ENCODE measurements at regions of chr18 and their contacts with region 1.

Region 1: DNA sequence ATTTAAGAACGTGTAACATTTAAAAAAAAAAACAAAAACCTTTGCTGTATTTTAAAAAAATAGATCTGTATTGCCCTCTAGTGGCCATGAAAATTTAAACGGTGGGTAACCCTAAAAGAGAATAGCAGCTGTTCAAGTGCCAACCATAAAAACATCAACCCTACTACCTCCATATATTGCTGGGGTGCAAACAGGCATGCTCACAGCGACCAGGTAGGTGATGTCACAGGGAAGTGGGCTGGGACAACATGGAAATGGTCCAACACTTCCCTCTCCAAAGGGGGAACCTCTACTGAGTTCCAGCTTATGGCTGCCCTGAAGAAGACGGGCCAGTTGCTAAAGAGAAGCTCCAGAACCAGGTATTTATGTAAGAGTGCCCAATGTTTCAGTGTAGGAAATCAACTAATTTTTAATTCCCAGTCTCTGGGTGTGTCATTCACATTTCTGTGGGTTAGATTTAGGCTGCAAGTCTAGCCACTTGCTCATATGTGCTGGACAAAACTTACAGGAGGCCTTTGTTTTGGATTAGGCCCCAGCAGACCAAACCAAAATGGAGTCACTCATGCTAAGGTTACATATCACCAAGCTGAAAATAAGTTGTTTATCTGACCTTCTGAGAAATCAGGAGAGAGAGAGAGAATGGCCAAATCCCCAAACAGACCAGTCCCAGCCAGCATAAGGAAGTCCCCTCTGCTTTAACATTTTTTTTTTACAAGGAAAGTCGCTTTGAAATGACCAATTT is 54.5 kb downstream of the SKA1 start:
- DNase-seq: no peak
- H3K4me3 ChIP-seq: no peak overlapping the region
- CTCF ChIP-seq: peak; percentile 5

Region 2: GRCh38 chr18:50410894-50411293 is 18.5 kb before region 1 on chr18:
- CTCF ChIA-PET with region 1: interaction called, 13 read pairs
- POLR2A ChIA-PET with region 1: no interaction called
- DNase-seq: peak; percentile 10
- H3K4me3 ChIP-seq: no peak overlapping the region
- CTCF ChIP-seq: no peak

Region 3: DNA sequence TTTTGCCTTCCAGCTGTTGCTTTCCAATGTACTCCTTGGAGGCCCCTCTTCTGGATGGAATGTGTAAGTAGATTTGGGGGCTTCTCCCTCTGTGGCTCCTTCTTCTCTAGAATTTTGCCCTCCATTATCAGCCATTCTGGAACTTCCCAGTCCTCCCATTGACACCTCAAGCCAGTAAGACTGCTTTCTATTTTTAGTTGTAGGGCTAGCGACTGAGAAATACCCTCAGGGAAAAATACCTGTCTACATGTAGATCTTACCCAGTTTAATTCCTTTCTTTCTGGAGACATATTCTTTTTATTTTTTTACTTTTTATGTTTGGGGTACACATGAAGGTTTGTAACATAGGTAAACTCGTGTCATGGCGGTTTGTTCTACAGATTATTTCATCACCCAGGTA is 10.2 kb before region 1 on chr18:
- CTCF ChIA-PET with region 1: interaction called, 16 read pairs
- POLR2A ChIA-PET with region 1: no interaction called
- DNase-seq: no peak
- H3K4me3 ChIP-seq: no peak overlapping the region
- CTCF ChIP-seq: no peak

Region 4: DNA sequence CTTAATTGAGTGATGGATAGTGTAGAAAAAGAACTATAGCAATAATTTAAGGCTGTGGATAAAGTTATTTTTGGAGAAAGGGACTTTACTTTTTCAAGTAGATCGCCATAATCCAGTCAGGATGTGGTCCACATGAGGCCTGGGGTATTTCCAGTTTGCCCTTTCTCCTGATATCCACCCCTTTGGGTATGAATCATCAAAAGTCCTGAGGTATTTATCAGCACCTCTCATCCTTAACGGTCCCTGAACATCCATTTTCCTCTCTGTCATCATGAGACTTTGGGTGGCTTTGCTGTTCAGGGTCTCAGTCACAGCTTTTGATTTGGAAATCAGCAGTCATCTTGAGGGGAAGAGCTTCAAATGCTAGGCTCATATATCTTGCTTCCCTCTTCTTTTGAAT is 499.2 kb after region 1 on chr18:
- CTCF ChIA-PET with region 1: no interaction called
- POLR2A ChIA-PET with region 1: no interaction called
- DNase-seq: no peak
- H3K4me3 ChIP-seq: no peak overlapping the region
- CTCF ChIP-seq: no peak

Measured in AG04449 (cell line).